Left ventricle myocardium superior (tissue), 1 donor: ENCODE measurements at regions of chr7 and their contacts with region 1.

Region 1: GRCh38 chr7:32154797-32155196 is 84.6 kb upstream of the PDE1C start:
- DNase-seq: peak; percentile 83
- ATAC-seq: peak; percentile 79

Region 2: GRCh38 chr7:32070406-32071360 is 84.1 kb before region 1 on chr7 and contains the start of gene PDE1C:
- intact Hi-C with region 1: loop called (anchors 5 kb)
- DNase-seq: peak; percentile 88
- ATAC-seq: peak; percentile 87
- total RNA-seq, gene PDE1C: 192 TPM